Heart left ventricle (tissue), 16 donors: ENCODE measurements at regions of chr7 and their contacts with region 1.

Region 1: GRCh38 chr7:93147363-93147762 is 822 bp downstream of the SAMD9L start:
- DNase-seq: peak in 4 of 5 donors; percentile 25 to 40 (median 38)
- ATAC-seq: peak; percentile 57 to 89 (median 78)
- H3K4me3 ChIP-seq: peak overlapping the region; percentile 4 to 68 (median 50)
- H3K27ac ChIP-seq: peak overlapping the region; percentile 20 to 94 (median 57)
- H3K4me1 ChIP-seq: peaks cover 0 to 50% (median 8%) of the 10 kb centered on the region in 12 donors
- H3K27me3 ChIP-seq: no peaks in the 10 kb centered on the region
- CTCF ChIP-seq: no peak
- POLR2A ChIP-seq: no peak

Region 2: GRCh38 chr7:93228302-93228701 is 80.9 kb after region 1 on chr7:
- intact Hi-C with region 1: loop called in 1 of 10 experiments (anchors 10 kb)
- DNase-seq: no peak
- ATAC-seq: no peak
- H3K4me3 ChIP-seq: no peak overlapping the region
- H3K27ac ChIP-seq: no peak overlapping the region
- H3K4me1 ChIP-seq: peaks cover 0 to 21% (median 7%) of the 10 kb centered on the region in 12 donors
- H3K27me3 ChIP-seq: no peaks in the 10 kb centered on the region
- CTCF ChIP-seq: peak; percentile 58 to 88 (median 79)
- POLR2A ChIP-seq: no peak